ENCODE measurements at regions of chr4 and their contacts with region 1.

Region 1: DNA sequence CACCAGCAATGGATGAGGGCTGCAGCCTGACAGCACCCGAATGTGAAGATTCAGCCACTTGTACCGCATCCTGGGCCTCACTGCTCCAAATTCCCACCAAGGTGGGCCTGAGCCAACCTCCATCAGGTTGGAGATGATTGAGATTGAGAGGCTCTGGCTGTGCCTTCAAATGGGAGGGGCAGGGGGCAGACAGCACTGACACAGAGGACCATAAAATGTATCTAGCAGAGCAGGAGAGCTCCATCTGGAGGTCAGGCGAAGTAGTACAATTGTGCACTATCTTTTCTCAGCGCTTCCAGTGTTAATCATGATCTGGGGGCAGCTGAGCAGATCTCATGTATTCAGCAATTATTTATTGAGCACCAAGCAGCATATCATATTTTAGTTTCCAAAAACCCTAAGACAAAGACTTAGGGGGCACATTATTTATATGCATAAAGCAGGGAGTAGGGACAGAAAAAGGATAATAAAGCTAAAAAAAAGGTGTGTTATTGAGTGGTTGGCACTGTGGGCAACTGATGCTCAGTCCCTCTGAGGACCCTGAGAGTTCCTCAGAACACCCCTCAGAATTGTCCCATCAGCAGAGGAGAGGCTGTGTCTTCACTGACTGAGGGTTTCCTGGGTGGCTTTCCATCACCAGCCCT is 31.6 kb upstream of the C1QTNF7 start:
- DNase-seq: peak; percentile 79
- ATAC-seq: peak; percentile 84
- H3K4me3 Mint-ChIP-seq: no peak overlapping the region
- H3K27ac Mint-ChIP-seq: no peak overlapping the region
- H3K4me1 Mint-ChIP-seq: peaks cover 26% of the 10 kb centered on the region
- H3K27me3 Mint-ChIP-seq: no peaks in the 10 kb centered on the region

Region 2: GRCh38 chr4:15231265-15232091 is 164.8 kb before region 1 on chr4:
- CTCF ChIA-PET with region 1: interaction called, 6 read pairs
- POLR2A ChIA-PET with region 1: no interaction called
- intact Hi-C with region 1: loop called (anchors 1 to 2 kb)
- DNase-seq: peak; percentile 85
- ATAC-seq: peak; percentile 65
- H3K4me3 Mint-ChIP-seq: no peak overlapping the region
- H3K27ac Mint-ChIP-seq: no peak overlapping the region
- H3K4me1 Mint-ChIP-seq: peaks cover 31% of the 10 kb centered on the region
- H3K27me3 Mint-ChIP-seq: no peaks in the 10 kb centered on the region

Region 3: GRCh38 chr4:15238720-15239119 is 157.6 kb before region 1 on chr4:
- CTCF ChIA-PET with region 1: interaction called, 4 read pairs
- POLR2A ChIA-PET with region 1: interaction called, 6 read pairs
- intact Hi-C with region 1: loop called (anchors 1 kb)
- DNase-seq: peak; percentile 58
- ATAC-seq: peak; percentile 55
- H3K4me3 Mint-ChIP-seq: no peak overlapping the region
- H3K27ac Mint-ChIP-seq: no peak overlapping the region
- H3K4me1 Mint-ChIP-seq: peaks cover 11% of the 10 kb centered on the region
- H3K27me3 Mint-ChIP-seq: no peaks in the 10 kb centered on the region

Region 4: DNA sequence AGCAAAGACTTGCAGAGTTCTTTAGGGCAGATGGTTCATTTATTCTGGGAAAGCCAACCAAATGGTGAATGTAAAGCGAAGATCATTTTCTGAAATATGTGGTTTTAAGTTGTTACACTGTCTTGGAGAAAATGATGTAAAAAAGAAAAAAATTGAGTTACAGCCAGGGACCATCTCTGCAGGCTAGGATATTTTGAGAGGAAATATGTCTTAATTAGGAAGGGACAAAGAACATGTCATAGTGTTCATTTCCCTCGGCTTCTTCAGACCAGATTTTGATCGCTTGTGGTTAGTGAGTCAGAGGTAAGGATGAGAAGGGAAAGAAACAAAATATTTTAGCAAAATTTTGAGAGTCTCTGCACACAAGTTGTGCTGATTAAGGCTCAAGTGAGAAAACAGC is 27.4 kb before region 1 on chr4:
- CTCF ChIA-PET with region 1: no interaction called
- POLR2A ChIA-PET with region 1: no interaction called
- intact Hi-C with region 1: no loop called
- DNase-seq: no peak
- ATAC-seq: peak; percentile 60
- H3K4me3 Mint-ChIP-seq: no peak overlapping the region
- H3K27ac Mint-ChIP-seq: no peak overlapping the region
- H3K4me1 Mint-ChIP-seq: peaks cover 23% of the 10 kb centered on the region
- H3K27me3 Mint-ChIP-seq: peaks cover 5% of the 10 kb centered on the region

Region 5: DNA sequence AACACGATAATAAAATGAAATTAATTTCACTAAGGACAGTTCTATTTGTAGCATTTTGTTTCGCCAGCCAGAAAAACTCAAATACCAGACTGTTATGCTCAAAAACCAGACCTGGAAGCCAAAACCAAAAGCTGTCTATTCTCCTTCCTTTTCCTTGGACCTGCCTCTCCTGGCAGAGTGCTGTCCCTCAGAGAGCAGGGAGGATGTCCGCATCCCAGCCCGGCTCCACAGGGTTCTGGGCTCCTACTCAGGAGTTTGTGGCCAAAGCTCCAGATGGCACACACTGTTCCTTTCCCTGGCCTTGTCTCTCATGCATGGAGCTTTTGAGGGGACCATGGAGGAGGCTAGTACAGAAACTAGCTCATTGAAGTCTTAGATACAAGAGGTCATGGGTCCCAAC is 10.4 kb before region 1 on chr4:
- CTCF ChIA-PET with region 1: interaction called, 13 read pairs
- POLR2A ChIA-PET with region 1: no interaction called
- intact Hi-C with region 1: no loop called
- DNase-seq: no peak
- ATAC-seq: no peak
- H3K4me3 Mint-ChIP-seq: no peak overlapping the region
- H3K27ac Mint-ChIP-seq: no peak overlapping the region
- H3K4me1 Mint-ChIP-seq: no peaks in the 10 kb centered on the region
- H3K27me3 Mint-ChIP-seq: no peaks in the 10 kb centered on the region

Region 6: DNA sequence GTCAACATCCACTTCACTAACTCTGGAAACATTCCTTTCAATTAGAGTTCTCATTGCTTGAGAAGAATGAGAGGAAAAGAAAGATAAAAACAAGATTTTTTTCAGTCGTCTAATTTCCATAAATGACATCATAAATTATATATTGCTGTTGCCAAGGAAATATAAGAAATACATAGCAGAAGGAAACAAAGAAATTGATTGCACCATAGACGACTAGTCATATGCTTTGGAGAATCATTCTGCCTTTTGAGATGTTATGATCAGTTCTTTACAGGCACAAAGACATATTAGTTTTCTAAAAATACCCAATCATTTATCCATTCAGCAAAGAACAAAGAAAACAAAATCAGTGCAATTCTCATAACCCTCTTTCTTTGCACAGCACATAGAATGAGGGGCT is 30.9 kb after region 1 on chr4:
- CTCF ChIA-PET with region 1: interaction called, 11 read pairs
- POLR2A ChIA-PET with region 1: no interaction called
- intact Hi-C with region 1: no loop called
- DNase-seq: no peak
- ATAC-seq: no peak
- H3K4me3 Mint-ChIP-seq: no peak overlapping the region
- H3K27ac Mint-ChIP-seq: no peak overlapping the region
- H3K4me1 Mint-ChIP-seq: peaks cover 34% of the 10 kb centered on the region
- H3K27me3 Mint-ChIP-seq: peaks cover 2% of the 10 kb centered on the region

Region 7: DNA sequence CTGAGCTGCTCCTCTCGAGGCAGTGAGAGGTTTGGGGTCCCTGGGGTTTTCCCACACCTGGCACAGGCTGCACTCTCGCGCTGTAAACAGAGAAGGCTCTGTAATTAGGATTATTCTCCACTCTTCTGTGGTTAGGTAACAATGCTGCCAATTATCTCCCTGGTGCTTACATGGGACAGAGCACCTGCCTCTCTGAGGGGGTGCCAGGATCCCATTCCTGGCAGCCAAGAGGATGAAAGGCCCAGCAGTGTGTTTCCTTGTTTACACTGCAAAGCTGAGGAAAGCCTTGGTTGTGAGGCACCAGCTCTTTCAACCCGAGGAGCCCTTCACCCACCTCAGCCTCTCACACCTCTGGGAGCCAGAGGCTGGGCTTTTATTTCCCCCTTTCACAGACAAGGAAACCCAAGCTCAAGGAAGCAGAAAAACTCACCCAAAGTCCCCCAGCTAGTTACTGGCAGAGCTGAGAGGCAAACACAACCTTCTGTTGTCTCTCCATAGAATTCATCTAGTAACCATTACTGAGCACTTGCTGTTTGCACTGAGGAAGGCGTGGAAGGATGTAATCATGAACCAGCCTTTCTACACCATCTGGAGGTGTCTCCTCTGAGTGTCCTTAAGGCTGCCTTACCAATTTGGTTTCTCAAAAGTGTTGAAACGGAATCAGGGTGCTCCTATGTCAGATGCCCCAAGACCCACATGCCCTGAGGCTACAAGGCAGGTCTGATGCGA is 727.2 kb after region 1 on chr4:
- CTCF ChIA-PET with region 1: no interaction called
- POLR2A ChIA-PET with region 1: no interaction called
- intact Hi-C with region 1: no loop called
- DNase-seq: no peak
- ATAC-seq: no peak
- H3K4me3 Mint-ChIP-seq: no peak overlapping the region
- H3K27ac Mint-ChIP-seq: peak overlapping the region; percentile 7
- H3K4me1 Mint-ChIP-seq: peaks cover 20% of the 10 kb centered on the region
- H3K27me3 Mint-ChIP-seq: peaks cover 2% of the 10 kb centered on the region

Measured in activated CD4-positive, alpha-beta T cell treated with anti-CD3 and anti-CD28 coated beads for 36 hours (primary cell).